ENCODE measurements at regions of chr5 and their contacts with region 1.

Region 1: DNA sequence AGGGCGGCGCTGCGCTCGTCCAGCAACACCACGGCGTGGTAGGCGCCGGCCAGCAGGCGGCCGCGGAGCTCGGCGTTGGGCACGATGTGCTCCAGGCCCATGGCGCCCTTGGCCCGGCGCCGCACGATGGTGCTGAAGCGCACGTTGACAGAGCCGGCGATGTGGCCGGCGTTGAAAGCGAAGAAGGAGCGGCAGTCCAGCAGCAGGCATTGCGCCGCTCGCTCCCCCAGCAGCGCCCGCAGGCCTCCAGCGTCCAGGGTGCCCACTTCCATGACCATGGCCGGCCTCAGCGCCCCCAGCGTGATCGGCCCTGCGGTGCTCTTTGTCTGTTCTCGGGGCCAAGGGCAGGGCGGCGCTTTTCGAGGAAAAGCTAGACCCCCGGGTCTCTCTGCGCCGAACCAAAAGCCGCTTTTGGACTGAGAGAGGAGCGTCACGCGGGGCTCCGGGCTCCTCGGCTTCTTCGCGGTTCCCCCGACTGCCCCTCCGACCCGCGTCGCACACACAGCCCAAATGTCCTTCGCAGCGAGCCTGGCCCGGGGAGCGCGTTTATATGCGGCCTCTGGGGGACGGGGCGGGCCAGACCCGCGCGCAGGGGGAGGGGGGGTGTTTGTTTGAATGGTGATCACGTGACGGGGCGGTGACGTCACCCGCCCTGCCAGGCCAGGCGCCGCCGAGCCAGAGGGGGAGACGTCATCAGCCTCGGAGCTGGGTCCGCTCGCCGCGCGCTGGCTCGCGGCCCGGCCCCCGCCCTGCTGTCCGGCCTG is at the start of gene DUSP1:
- DNase-seq: peak; percentile 100
- ATAC-seq: peak; percentile 82
- H3K4me3 ChIP-seq: peak within 1 kb of the TSS; percentile 79
- H3K27ac ChIP-seq: peak within 1 kb of the TSS; percentile 99
- H3K4me1 ChIP-seq: peaks cover 4% of the 10 kb centered on the region
- H3K27me3 ChIP-seq: no peaks in the 10 kb centered on the region
- total RNA-seq, gene DUSP1: 81.3 to 247 (median 105) TPM

Region 2: DNA sequence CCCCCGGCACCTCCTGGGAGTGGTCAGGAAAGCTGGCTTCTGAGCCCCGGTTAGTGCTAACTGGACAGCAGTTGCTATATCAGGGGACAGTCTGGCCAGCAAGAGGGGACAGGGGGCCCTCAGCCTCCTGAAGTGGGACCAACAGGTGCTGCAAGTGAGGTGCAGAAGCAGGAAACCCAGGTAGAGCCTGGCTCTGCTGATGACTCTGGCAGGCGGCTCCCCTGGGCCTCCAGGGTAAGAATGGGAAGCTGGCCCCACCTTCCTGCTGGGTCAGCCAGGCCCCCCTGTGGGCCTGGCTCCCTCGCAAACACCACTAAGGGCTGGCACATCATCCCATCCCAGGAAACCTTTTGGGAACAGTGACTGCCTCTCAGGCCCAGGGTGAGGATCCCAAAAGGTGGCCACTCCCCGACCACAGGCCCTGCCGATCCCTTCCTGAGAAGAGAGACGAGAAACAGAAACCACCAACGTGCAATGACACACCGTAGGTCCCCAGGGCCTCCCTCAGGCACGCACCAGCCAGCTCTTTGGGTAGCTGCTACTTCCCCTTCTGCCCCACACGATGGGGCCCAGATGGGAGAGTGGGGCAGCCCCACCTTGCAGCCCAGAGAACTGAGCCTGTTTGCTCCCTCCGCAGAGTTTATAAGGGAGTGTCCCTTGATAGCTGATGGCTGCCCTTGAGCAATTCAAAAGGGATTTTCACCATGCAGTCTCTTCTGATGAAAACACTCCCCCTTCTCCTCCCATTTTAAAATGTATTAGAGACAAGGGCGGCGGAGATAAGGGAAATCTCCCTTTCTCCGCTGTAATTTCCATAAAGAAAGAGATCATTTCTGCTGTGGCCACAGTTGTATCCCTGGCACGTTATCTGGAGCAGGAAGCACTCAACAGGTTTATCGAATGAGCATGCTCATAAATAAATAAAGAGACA is 659.7 kb before region 1 on chr5:
- intact Hi-C with region 1: no loop called
- DNase-seq: peak; percentile 37 to 74 (median 64)
- ATAC-seq: peak; percentile 56 to 57
- H3K4me3 ChIP-seq: no peak overlapping the region
- H3K27ac ChIP-seq: peak overlapping the region; percentile 19
- H3K4me1 ChIP-seq: peaks cover 8% of the 10 kb centered on the region
- H3K27me3 ChIP-seq: no peaks in the 10 kb centered on the region

Region 3: DNA sequence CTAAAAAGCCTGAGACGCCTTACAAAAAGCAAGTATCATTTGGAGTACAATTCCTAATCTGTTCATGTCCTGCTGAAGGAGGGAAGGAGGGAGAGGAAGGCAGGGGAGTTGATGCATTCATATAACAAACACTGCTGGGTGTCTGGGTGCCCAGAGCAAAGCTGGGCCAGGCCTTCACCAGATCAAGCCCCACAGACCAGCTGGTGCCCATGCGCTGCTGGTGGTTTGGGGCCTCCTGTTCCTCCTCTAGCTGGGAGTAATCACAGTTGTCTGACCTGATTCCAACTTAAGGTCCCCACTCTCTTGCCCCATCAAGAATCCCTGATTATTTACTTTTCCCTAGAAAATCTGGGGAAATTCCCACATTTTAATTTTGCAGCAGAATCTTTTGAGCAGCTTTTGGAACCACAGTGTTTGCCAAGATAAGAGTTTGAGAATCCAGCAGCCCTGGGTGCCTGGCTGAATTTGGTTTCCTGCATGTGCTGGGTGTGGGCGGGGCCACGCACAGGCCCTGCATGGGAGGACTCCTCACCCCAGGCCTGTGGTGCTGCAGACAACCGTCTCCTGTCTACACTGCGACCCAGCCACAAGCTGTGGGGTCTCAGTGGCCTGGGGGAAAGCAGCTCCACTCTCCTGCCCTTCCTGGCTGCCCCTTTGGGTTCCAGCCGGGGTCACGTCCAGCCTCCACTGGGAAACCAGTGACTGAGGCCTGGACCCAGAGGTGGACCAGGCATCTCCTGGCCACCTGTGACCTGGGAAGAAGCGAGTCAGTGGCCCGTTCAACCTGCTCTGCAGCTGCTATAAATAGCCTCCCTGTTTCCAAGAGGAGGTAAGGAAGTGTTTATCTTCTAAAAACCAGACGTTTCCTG is 82.3 kb before region 1 on chr5:
- intact Hi-C with region 1: no loop called
- DNase-seq: peak in 2 of 3 donors; percentile 80 to 86
- ATAC-seq: peak; percentile 66 to 72
- H3K4me3 ChIP-seq: no peak overlapping the region
- H3K27ac ChIP-seq: peak overlapping the region; percentile 19
- H3K4me1 ChIP-seq: peaks cover 17% of the 10 kb centered on the region
- H3K27me3 ChIP-seq: no peaks in the 10 kb centered on the region

Region 4: DNA sequence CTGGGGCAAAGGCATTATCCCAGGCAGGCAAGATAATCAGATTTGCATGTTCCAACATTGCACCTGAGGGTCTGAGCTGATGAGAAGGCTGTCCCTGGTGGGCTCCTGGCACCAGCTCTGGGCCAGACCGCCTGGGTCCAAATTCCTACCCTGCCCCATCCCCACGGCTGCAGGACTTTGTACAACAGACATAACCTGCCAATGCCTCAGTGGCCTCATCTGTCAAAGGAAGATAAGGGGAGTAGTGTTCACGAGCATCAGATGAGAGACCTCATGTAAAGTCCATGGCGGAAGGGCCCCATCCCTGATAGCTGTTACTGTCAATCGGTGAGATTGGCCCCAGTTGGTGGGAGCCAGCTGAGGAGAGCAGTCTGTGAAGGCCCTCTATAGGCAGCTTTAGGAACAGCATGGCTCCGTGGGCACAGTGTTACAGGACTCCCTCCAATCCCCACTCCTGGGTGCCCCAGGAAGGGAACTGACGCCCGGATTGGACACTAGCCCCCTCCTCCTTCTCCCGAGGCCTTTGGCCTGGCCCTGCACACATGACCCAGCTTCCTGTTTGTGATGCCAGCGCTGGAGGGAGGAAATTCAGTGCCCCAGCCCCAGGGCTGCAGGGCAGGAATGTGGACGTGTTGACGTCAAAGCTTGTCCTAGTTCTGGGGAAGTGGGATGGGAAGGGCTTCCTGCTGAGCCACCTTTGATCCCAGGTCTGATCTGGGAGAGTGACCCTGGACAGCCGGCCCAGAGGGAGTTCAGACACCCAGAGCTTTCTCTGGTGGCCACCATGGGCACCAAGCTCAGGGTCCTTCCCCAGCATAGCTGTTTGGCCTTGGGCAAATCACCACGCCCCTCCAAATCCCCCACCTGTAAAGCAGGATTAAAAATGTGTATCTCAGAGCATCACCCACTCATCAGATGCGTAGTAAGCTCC is 56.1 kb before region 1 on chr5:
- intact Hi-C with region 1: loop called (anchors 2 to 5 kb)
- DNase-seq: peak; percentile 84 to 92 (median 90)
- ATAC-seq: peak; percentile 76 to 80
- H3K4me3 ChIP-seq: no peak overlapping the region
- H3K27ac ChIP-seq: peak overlapping the region; percentile 89
- H3K4me1 ChIP-seq: peaks cover 7% of the 10 kb centered on the region
- H3K27me3 ChIP-seq: no peaks in the 10 kb centered on the region

Region 5: GRCh38 chr5:172833686-172834414 is 63.0 kb after region 1 on chr5 and contains the start of gene ERGIC1:
- intact Hi-C with region 1: loop called in 1 of 4 experiments (anchors 10 kb)
- DNase-seq: peak; percentile 90 to 96 (median 95)
- ATAC-seq: peak; percentile 91 to 92
- H3K4me3 ChIP-seq: peak within 1 kb of the TSS; percentile 89
- H3K27ac ChIP-seq: peak within 1 kb of the TSS; percentile 79
- H3K4me1 ChIP-seq: peaks cover 3% of the 10 kb centered on the region
- H3K27me3 ChIP-seq: no peaks in the 10 kb centered on the region
- total RNA-seq, gene ERGIC1: 75.7 to 96.8 (median 86.9) TPM

Region 6: GRCh38 chr5:172902497-172903200 is 131.8 kb after region 1 on chr5:
- intact Hi-C with region 1: loop called in 2 of 4 experiments (anchors 10 kb)
- DNase-seq: peak; percentile 76 to 92 (median 90)
- ATAC-seq: peak; percentile 54 to 66
- H3K4me3 ChIP-seq: no peak overlapping the region
- H3K27ac ChIP-seq: peak overlapping the region; percentile 57
- H3K4me1 ChIP-seq: peaks cover 20% of the 10 kb centered on the region
- H3K27me3 ChIP-seq: no peaks in the 10 kb centered on the region

Region 7: GRCh38 chr5:172910828-172911627 is 140.2 kb after region 1 on chr5:
- intact Hi-C with region 1: loop called in 3 of 4 experiments (anchors 5 to 10 kb)
- DNase-seq: peak; percentile 73 to 88 (median 85)
- ATAC-seq: peak; percentile 85 to 90
- H3K4me3 ChIP-seq: no peak overlapping the region
- H3K27ac ChIP-seq: peak overlapping the region; percentile 54
- H3K4me1 ChIP-seq: peaks cover under 1% of the 10 kb centered on the region
- H3K27me3 ChIP-seq: no peaks in the 10 kb centered on the region

Region 8: GRCh38 chr5:172932313-172933017 is 161.6 kb after region 1 on chr5:
- intact Hi-C with region 1: loop called in 2 of 4 experiments (anchors 5 kb)
- DNase-seq: peak; percentile 73 to 90 (median 88)
- ATAC-seq: peak; percentile 78 to 80
- H3K4me3 ChIP-seq: no peak overlapping the region
- H3K27ac ChIP-seq: peak overlapping the region; percentile 31
- H3K4me1 ChIP-seq: peaks cover 5% of the 10 kb centered on the region
- H3K27me3 ChIP-seq: no peaks in the 10 kb centered on the region